GM10248 (cell line): ENCODE measurements at regions of chr13 and their contacts with region 1.

Region 1: DNA sequence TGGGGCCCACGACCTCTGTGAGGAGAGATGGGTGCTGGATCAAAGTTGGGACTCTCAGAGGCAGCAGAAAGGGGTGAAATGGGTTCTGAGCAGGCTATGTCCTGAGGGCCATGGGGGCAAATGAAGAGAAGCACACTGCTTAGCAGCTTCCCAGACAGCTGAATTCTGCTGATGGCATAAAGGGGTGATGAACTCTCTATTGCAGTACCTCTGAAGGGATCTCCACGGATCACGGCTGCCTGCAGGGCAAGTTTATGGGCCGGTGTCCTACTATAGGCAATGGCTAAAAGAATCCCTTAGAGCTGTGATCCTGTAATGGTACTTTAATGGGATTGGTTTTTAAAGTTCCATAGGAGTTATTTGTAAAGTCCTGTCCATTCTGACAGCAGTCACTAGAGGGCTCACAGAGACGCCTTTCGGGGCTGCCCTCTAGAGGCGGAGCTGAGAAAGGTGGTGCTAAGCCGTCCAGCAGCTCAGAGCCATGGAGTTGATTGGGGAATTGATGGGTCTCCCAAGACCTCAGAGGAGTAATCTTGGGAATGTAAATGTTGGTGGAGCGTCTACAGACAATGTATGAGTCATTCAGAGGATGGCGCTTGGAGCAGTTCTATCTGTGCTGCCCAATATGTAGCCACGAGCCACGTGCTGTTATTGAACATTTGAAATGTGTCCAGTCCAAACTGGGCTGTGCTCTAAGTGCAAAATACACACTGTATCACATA is 287.3 kb downstream of the COG6 start:
- DNase-seq: peak; percentile 77
- CTCF ChIP-seq: peak; percentile 100

Region 2: GRCh38 chr13:39930060-39930459 is 12.7 kb before region 1 on chr13:
- CTCF ChIA-PET with region 1: interaction called, 11 read pairs
- POLR2A ChIA-PET with region 1: no interaction called
- DNase-seq: no peak
- CTCF ChIP-seq: no peak

Region 3: DNA sequence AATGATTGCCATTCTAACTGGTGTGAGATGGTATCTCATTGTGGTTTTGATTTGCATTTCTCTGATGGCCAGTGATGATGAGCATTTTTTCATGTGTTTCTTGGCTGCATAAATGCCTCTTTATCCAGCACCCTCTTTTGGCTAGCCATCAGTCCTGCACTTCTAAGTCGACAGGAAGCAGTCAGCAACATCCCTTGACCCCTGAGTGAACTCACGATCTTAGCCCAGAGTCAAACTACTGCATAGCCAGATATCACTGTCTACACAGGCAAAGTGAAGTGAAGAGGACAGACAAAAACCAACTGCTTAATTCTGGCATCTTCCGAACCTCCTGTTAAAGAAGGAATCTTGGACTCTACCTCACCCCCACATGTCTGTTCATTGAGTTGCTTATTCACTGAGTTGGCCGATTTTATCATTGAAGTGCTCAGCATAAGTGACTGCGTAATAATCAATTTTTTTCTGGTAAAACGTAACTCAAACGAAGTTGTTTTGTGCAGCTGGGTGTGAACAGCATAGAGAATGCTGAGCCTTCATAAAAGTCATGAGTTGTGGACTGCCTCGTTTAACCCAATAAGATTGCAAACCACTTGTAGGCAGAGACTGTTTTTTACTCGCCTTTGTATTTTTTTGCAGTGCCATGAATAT is 16.9 kb after region 1 on chr13:
- CTCF ChIA-PET with region 1: interaction called, 72 read pairs
- POLR2A ChIA-PET with region 1: no interaction called
- DNase-seq: no peak
- CTCF ChIP-seq: no peak

Region 4: GRCh38 chr13:39976481-39976880 is 33.8 kb after region 1 on chr13:
- CTCF ChIA-PET with region 1: interaction called, 10 read pairs
- POLR2A ChIA-PET with region 1: no interaction called
- DNase-seq: no peak
- CTCF ChIP-seq: no peak